HAP-1 (cell line): ENCODE measurements at regions of chr17 and their contacts with region 1.

Region 1: GRCh38 chr17:61412143-61412859 is 12.7 kb downstream of the TBX2 start:
- DNase-seq: peak; percentile 65 to 84
- H3K4me3 ChIP-seq: peak overlapping the region; percentile 55
- H3K4me1 ChIP-seq: peaks cover 22% of the 10 kb centered on the region
- H3K27me3 ChIP-seq: no peaks in the 10 kb centered on the region

Region 2: GRCh38 chr17:61574542-61575174 is 162.4 kb after region 1 on chr17:
- in situ Hi-C with region 1: loop called (anchors 10 kb)
- DNase-seq: peak; percentile 38 to 57
- H3K4me3 ChIP-seq: no peak overlapping the region
- H3K4me1 ChIP-seq: peaks cover 4% of the 10 kb centered on the region; the same call in 1 of the 2 replicates
- H3K27me3 ChIP-seq: no peaks in the 10 kb centered on the region